Heart left ventricle (tissue), 16 donors: ENCODE measurements at regions of chr17 and their contacts with region 1.

Region 1: GRCh38 chr17:66248285-66248684 is 19.1 kb upstream of the APOH start:
- DNase-seq: peak in 2 of 5 donors; percentile 35 to 48
- ATAC-seq: peak; percentile 73 to 95 (median 90)
- H3K4me3 ChIP-seq: no peak overlapping the region
- H3K27ac ChIP-seq: peak overlapping the region in 1 of 12 donors; percentile 22
- H3K4me1 ChIP-seq: peaks cover 0 to 6% (median 0%) of the 10 kb centered on the region in 12 donors
- H3K27me3 ChIP-seq: no peaks in the 10 kb centered on the region
- CTCF ChIP-seq: no peak
- POLR2A ChIP-seq: no peak

Region 2: GRCh38 chr17:66207936-66208335 is 40.3 kb before region 1 on chr17:
- intact Hi-C with region 1: loop called in 1 of 10 experiments (anchors 5 kb)
- DNase-seq: no peak
- ATAC-seq: peak; percentile 57 to 85 (median 76)
- H3K4me3 ChIP-seq: no peak overlapping the region
- H3K27ac ChIP-seq: peak overlapping the region in 1 of 12 donors; percentile 23
- H3K4me1 ChIP-seq: peaks cover 0 to 18% (median 0%) of the 10 kb centered on the region in 12 donors
- H3K27me3 ChIP-seq: no peaks in the 10 kb centered on the region
- CTCF ChIP-seq: peak in 2 of 12 donors; percentile 10 to 20
- POLR2A ChIP-seq: no peak

Region 3: GRCh38 chr17:66275651-66276050 is 27.4 kb after region 1 on chr17:
- intact Hi-C with region 1: no loop called
- DNase-seq: no peak
- ATAC-seq: peak in 2 of 4 donors; percentile 31 to 54
- H3K4me3 ChIP-seq: no peak overlapping the region
- H3K27ac ChIP-seq: no peak overlapping the region
- H3K4me1 ChIP-seq: peaks cover 0 to 6% (median 0%) of the 10 kb centered on the region in 12 donors
- H3K27me3 ChIP-seq: no peaks in the 10 kb centered on the region
- CTCF ChIP-seq: no peak
- POLR2A ChIP-seq: no peak